KBM-7 (cell line): ENCODE measurements at regions of chr1 and their contacts with region 1.

Region 1: DNA sequence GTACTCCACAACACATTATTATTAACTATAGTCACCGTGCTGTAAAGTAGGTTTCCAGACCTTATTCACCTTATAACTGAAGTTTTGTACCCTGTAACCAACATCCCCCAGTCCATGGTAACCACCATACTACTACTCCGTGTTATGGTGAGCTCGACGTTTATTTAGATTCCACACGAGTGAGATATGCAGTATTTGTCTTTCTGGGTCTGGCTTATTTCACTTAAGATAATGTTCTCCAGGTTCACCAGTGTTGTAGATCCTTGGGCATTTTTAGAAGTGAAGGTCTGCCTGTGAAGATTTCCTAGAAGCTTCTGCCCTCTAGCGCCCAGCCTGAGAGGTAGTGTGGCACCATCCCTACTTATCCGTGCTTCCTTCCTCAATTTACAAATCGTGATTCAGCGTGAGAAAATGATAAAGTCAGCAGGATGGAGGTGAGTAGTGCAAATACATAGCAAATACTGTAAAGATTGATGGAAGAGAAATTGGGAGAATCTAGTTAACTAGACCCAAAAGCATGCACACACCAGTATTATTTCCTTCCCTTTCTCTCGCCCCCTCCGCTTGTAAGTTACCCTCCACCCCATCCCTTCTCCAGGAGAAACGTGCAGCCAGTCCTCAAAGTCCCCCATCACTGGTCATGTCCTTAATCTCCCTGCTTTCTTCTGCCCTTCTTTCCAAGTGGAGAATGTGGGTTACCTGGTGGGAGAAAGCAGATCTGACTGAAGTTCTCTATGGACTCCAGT is 36.0 kb upstream of the DISC1 start:
- DNase-seq: peak; percentile 83

Region 2: DNA sequence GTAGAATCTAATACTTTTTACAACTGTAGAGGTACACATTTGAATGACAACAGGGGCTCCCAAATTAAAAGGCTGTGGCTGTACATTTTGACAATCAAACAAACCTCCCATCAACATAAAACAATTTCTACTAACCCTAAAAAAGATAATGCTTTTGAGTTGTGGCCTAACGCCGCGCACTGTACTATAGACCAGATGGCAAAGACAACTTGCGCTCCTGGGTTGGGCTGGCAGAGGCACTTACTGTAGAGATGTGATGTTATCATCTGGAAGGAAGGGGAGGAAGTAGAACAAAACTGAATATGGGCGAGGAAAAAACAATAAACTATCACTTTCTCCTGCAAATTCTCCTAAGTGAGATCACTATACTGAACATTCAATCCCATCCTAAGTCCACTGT is 226.4 kb before region 1 on chr1:
- in situ Hi-C with region 1: loop called (anchors 5 kb)
- DNase-seq: no peak

Region 3: DNA sequence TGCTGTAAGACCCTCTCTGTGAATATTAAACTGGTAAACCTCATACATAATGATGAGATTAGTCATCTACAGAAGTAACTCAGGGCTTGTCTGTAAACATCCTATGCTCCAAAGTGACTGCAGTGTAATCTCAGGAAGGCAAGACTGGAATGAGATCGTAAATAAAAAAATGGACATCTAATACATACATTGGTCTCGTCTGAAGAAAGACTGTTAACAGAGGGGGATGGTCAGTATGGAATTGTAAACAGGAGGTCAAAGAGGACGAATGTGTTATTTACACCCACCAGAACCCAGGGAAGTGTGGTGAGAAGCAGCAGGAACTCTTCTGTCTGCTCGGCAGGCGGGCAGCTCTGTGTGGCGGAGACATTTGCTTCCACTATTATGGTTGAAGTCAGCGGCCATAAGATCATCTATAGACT is 87.4 kb after region 1 on chr1:
- in situ Hi-C with region 1: no loop called
- DNase-seq: no peak